ENCODE measurements at regions of chr1 and their contacts with region 1.

Region 1: GRCh38 chr1:41268154-41268770 is 26.2 kb upstream of the SCMH1 start:
- DNase-seq: peak; percentile 50
- H3K4me3 ChIP-seq: no peak overlapping the region
- H3K27ac ChIP-seq: no peak overlapping the region
- H3K4me1 ChIP-seq: no peaks in the 10 kb centered on the region
- H3K27me3 ChIP-seq: no peaks in the 10 kb centered on the region
- CTCF ChIP-seq: peak; percentile 94 to 98

Region 2: GRCh38 chr1:40784771-40785151 is 483.5 kb before region 1 on chr1:
- CTCF ChIA-PET with region 1: no interaction called
- dilution Hi-C with region 1: no loop called
- in situ Hi-C with region 1: no loop called
- intact Hi-C with region 1: no loop called
- DNase-seq: no peak
- H3K4me3 ChIP-seq: no peak overlapping the region
- H3K27ac ChIP-seq: no peak overlapping the region
- H3K4me1 ChIP-seq: peaks cover 5% of the 10 kb centered on the region
- H3K27me3 ChIP-seq: peaks cover 8% of the 10 kb centered on the region
- CTCF ChIP-seq: no peak

Region 3: GRCh38 chr1:41516168-41517061 is 248.2 kb after region 1 on chr1:
- CTCF ChIA-PET with region 1: no interaction called
- dilution Hi-C with region 1: no loop called
- in situ Hi-C with region 1: no loop called
- intact Hi-C with region 1: loop called (anchors 1 kb)
- DNase-seq: peak; percentile 71
- H3K4me3 ChIP-seq: peak overlapping the region in 2 of 3 experiments; percentile 18 to 38
- H3K27ac ChIP-seq: no peak overlapping the region
- H3K4me1 ChIP-seq: peaks cover 23% of the 10 kb centered on the region
- H3K27me3 ChIP-seq: no peaks in the 10 kb centered on the region
- CTCF ChIP-seq: peak; percentile 69 to 91

Region 4: DNA sequence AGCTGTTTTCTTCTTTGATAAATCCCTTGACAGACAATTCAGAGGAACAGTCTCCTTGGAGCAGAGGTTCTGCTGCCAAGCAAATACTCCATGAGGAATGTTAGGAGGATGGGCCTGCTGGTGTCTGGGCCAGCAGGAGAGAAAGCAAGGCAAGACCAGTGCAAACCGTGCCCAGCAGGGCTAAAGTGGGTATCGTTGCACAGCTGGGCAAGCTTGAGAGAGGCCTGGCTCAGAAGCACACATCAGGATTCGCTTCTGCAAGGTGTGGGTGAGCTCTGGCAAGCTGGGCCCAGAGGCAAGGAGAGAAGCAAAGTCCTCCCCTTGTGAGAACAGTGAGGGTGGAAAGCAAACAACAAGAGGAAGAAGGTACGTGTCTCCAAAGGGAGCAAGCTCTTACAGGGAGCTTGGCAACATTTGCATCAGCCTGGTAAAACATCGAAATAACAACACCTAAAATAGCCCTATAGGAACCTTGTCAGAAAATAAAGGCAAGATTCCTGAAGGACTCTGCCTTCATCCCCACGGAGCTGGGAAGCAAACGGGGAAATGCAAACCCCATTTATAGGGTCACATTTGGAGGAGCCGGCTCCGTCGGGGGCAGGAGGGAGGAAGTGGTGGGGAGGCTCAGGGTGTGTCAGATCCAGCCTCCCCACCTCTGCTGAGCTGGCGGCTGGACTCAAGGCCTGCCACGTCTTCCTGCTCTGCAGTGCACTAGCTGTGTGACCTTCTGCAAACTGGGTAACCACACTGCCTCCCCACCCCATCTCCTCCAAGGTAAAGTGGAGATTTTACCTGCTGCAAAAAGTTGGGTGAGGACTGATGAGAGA is 712.8 kb after region 1 on chr1:
- CTCF ChIA-PET with region 1: no interaction called
- dilution Hi-C with region 1: loop called (anchors 10 kb)
- in situ Hi-C with region 1: no loop called
- intact Hi-C with region 1: no loop called
- DNase-seq: no peak
- H3K4me3 ChIP-seq: no peak overlapping the region
- H3K27ac ChIP-seq: no peak overlapping the region
- H3K4me1 ChIP-seq: no peaks in the 10 kb centered on the region
- H3K27me3 ChIP-seq: no peaks in the 10 kb centered on the region
- CTCF ChIP-seq: no peak